ENCODE measurements at regions of chrX and their contacts with region 1.

Region 1: GRCh38 chrX:118637997-118638396 is 89.4 kb upstream of the IL13RA1 start:
- DNase-seq: no peak
- ATAC-seq: no peak
- H3K4me3 ChIP-seq: no peak overlapping the region
- H3K4me3 Mint-ChIP-seq: no peak overlapping the region
- H3K27ac ChIP-seq: no peak overlapping the region
- H3K27ac Mint-ChIP-seq: peak overlapping the region; percentile 47
- H3K4me1 ChIP-seq: no peaks in the 10 kb centered on the region
- H3K4me1 Mint-ChIP-seq: no peaks in the 10 kb centered on the region
- H3K27me3 ChIP-seq: no peaks in the 10 kb centered on the region
- H3K27me3 Mint-ChIP-seq: no peaks in the 10 kb centered on the region
- CTCF ChIP-seq: no peak

Region 2: GRCh38 chrX:118614150-118614549 is 23.8 kb before region 1 on chrX:
- CTCF ChIA-PET with region 1: no interaction called
- POLR2A ChIA-PET with region 1: no interaction called
- intact Hi-C with region 1: loop called in 1 of 2 experiments (anchors 2 kb)
- DNase-seq: no peak
- ATAC-seq: no peak
- H3K4me3 ChIP-seq: no peak overlapping the region
- H3K4me3 Mint-ChIP-seq: no peak overlapping the region
- H3K27ac ChIP-seq: no peak overlapping the region
- H3K27ac Mint-ChIP-seq: peak overlapping the region; percentile 76
- H3K4me1 ChIP-seq: no peaks in the 10 kb centered on the region
- H3K4me1 Mint-ChIP-seq: peaks cover 7% of the 10 kb centered on the region
- H3K27me3 ChIP-seq: no peaks in the 10 kb centered on the region
- H3K27me3 Mint-ChIP-seq: no peaks in the 10 kb centered on the region
- CTCF ChIP-seq: no peak